ENCODE measurements at regions of chr1 and their contacts with region 1.

Region 1: GRCh38 chr1:110495926-110496600 is 22.9 kb downstream of the KCNA10 start:
- DNase-seq: peak; percentile 86
- H3K4me3 ChIP-seq: no peak overlapping the region
- H3K27ac ChIP-seq: no peak overlapping the region
- H3K4me1 ChIP-seq: peaks cover 0 to 5% (median 0%) of the 10 kb centered on the region in 6 donors
- H3K27me3 ChIP-seq: no peaks in the 10 kb centered on the region
- CTCF ChIP-seq: peak; percentile 70 to 90 (median 84)
- POLR2A ChIP-seq: no peak

Region 2: GRCh38 chr1:110209715-110210603 is 286.1 kb before region 1 on chr1 and contains the start of gene KCNC4:
- intact Hi-C with region 1: loop called (anchors 10 kb)
- DNase-seq: peak; percentile 98
- H3K4me3 ChIP-seq: peak within 1 kb of the TSS; percentile 70 to 92 (median 82)
- H3K27ac ChIP-seq: peak within 1 kb of the TSS; percentile 73 to 97 (median 92)
- H3K4me1 ChIP-seq: peaks cover 23 to 70% (median 52%) of the 10 kb centered on the region in 6 donors
- H3K27me3 ChIP-seq: peaks cover 0 to 22% (median 5%) of the 10 kb centered on the region in 7 donors
- CTCF ChIP-seq: peak in 5 of 11 experiments; percentile 8 to 47 (median 16)
- POLR2A ChIP-seq: peak in 1 of 3 donors; percentile 9
- total RNA-seq, gene KCNC4: 9.8 to 22.1 (median 14.8) TPM

Region 3: GRCh38 chr1:110879758-110880606 is 383.9 kb after region 1 on chr1:
- intact Hi-C with region 1: no loop called
- DNase-seq: no peak
- H3K4me3 ChIP-seq: peak overlapping the region in 4 of 8 donors; percentile 6 to 92 (median 38)
- H3K27ac ChIP-seq: peak overlapping the region; percentile 6 to 97 (median 78)
- H3K4me1 ChIP-seq: peaks cover 45 to 95% (median 90%) of the 10 kb centered on the region in 6 donors
- H3K27me3 ChIP-seq: no peaks in the 10 kb centered on the region
- CTCF ChIP-seq: no peak
- POLR2A ChIP-seq: no peak

Measured in spleen (tissue), 13 donors.